Activated CD4-positive, alpha-beta T cell treated with anti-CD3 and anti-CD28 coated beads, Interleukin-2, amount 10 ng/mL, durations not matched to agents 24 days and 14 days (primary cell): ENCODE measurements at regions of chr22 and their contacts with region 1.

Region 1: DNA sequence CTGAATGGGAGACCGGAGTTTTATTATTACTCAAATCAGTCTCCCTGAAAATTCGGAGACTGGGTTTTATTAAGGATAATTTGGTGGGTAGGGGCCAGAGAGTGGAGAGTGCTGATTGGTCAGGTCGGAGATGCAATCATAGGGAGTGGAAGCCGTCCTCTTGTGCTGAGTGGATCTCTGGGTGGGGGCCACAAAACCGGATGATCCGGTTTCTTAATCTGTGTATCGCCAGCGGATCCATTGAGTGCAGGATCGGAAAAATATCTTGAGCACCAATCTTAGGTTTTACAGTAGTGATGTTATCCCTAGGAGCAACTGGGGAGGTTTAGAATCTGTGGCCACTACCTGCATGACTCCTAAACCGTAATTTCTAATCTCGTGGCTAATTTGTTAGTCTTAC is 894 bp upstream of the NIPSNAP1 start:
- DNase-seq: no peak
- H3K4me3 Mint-ChIP-seq: peak overlapping the region; percentile 96
- H3K27ac Mint-ChIP-seq: peak overlapping the region; percentile 95
- H3K4me1 Mint-ChIP-seq: peaks cover 17% of the 10 kb centered on the region
- H3K27me3 Mint-ChIP-seq: no peaks in the 10 kb centered on the region

Region 2: GRCh38 chr22:29385151-29386131 is 196.4 kb before region 1 on chr22:
- intact Hi-C with region 1: no loop called
- DNase-seq: no peak
- H3K4me3 Mint-ChIP-seq: no peak overlapping the region
- H3K27ac Mint-ChIP-seq: peak overlapping the region; percentile 30
- H3K4me1 Mint-ChIP-seq: peaks cover 42% of the 10 kb centered on the region
- H3K27me3 Mint-ChIP-seq: no peaks in the 10 kb centered on the region

Region 3: GRCh38 chr22:29553351-29554224 is 28.2 kb before region 1 on chr22 and contains the start of gene THOC5:
- intact Hi-C with region 1: loop called (anchors 1 kb)
- DNase-seq: peak; percentile 97
- H3K4me3 Mint-ChIP-seq: peak within 1 kb of the TSS; percentile 97
- H3K27ac Mint-ChIP-seq: peak within 1 kb of the TSS; percentile 96
- H3K4me1 Mint-ChIP-seq: peaks cover 12% of the 10 kb centered on the region
- H3K27me3 Mint-ChIP-seq: no peaks in the 10 kb centered on the region
- total RNA-seq, gene THOC5: 66.6 and 68.1 TPM in 2 replicates